Prostate gland (tissue), 2 donors: ENCODE measurements at regions of chr17 and their contacts with region 1.

Region 1: DNA sequence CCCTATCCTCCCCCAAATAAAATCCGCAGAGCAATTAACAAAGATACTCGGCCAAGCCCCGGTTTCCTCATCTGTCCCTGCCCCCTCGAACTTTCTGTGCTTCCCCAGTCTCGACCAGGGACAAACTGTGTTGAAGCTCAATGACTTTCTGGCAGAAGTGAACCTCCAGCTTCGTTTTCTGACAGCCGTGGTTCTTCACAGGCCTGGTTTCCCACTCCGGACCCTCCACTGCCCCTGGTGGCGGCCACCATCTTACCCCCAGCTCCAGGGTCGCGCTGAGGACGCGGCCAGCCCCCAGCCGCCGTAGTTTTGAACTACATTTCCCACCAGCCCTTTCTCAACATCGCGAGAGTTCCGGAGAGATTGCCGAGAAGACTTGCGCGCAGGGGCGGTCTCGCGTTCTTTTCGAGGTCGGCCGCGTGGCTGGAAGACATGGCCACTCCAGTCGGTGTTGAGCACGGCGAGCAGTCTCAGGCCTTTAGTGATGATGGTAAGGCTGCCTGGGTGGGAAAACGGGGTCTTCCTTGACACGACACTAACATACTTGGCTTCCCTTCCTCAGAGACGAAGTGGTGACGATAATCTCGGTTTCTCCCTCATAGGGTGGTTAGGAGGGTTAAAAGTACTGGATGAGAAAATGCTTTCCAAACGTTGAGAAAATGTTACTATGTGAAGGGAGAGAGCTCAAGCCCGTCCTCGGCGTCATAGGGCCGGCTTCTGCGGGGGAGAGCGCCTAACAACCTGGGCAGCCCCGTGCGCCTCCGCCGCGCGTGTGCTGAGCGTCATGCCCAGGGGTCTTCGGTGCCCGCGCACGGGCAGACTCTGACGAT is 17.7 kb downstream of the PRCD start:
- DNase-seq: peak; percentile 95
- H3K4me3 ChIP-seq: peak overlapping the region; percentile 48 to 61
- H3K27ac ChIP-seq: peak overlapping the region; percentile 84
- H3K4me1 ChIP-seq: no peaks in the 10 kb centered on the region
- H3K27me3 ChIP-seq: no peaks in the 10 kb centered on the region
- CTCF ChIP-seq: peak in 2 of 4 experiments; percentile 67 to 71
- POLR2A ChIP-seq: peak; percentile 77

Region 2: DNA sequence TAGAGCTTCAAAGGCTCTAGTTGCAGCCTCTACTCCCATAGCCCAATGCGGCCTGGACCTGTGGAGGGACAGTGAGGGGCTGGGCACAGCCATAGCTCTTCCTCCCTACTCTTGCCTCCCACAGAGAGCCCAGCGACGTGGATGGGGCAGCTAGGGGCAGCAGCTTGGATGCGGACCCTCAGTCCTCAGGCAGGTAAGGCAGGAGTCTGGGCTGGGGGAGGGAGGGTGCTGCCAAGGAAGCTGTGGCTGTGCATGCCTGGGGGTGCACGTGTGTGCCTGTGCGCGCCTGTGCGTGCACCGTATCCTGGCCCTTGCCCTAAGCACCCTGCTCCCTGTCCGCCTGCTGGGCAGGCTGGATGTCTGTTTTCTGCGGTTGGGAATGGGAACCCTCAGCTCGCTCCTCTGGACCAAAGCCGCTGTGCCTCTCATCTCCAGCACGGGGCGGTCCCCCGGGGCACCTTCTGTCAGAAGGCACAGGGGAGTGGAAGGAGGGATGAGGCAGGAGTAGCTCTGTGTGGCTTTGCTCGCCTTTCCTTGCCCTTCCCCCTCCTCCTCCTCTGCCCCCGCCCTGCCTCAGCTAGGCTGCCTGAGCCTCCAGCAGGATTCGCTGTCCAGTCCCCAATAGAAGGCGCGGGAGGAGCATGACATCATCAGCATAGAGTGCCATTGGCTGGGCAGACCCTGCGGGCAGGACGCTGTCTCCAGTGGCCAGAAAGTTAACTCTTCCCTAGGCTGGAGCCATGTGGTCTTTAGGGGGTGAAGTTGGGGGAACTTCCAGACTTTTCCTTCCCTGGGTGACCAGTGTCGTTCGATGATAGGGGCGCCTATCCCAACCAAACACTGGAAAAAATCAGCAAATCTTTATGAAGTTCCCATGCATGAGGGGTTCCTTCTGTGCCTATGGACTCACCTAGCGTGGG is 16.9 kb before region 1 on chr17:
- intact Hi-C with region 1: no loop called
- DNase-seq: peak; percentile 90
- H3K4me3 ChIP-seq: peak overlapping the region in 1 of 2 donors; percentile 22
- H3K27ac ChIP-seq: peak overlapping the region; percentile 47
- H3K4me1 ChIP-seq: peaks cover 4% of the 10 kb centered on the region
- H3K27me3 ChIP-seq: peaks cover 3% of the 10 kb centered on the region
- CTCF ChIP-seq: peak in 2 of 4 experiments; percentile 46
- POLR2A ChIP-seq: peak; percentile 52

Region 3: DNA sequence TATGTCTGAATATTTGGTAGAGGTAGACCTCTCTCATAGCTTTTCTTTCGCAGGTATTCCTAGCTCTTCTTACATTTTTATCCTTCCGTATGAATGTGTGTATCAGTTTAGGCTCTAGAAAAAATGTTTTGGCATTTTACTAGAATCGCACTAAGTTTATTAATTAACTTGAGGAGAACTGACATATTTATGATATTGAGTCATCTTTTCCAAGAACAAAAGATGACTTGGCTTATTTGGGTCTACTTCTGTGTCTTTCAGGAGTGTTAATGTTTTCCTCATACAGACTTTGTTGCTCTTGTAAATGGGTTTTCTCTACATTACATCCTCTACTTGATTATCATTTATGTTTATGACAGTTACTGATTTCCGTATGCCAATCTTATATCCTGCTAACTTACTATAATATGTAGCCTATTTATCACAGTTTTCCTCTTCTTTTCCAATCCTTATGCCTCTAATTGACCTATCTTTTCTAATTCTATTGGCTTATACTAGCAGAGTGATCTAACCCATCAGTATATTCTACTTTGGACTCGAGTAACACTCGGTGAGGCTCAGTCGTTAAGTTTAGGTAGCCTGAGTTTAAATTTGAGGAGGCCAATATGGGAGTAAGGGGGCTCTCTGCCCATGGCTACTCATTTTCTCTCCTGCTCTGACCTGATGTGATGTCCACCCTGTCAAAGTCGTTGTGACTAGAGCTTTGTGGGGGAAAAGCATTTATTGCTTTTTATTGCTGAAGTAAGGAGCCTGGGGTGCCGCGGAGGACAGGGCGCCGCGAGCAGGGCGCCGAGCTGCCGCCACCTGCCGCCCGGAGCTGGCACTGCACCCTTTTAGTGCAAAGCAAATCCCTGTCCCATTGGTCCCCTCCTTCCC is 65.9 kb after region 1 on chr17:
- intact Hi-C with region 1: loop called (anchors 5 kb)
- DNase-seq: peak; percentile 62
- H3K4me3 ChIP-seq: no peak overlapping the region
- H3K27ac ChIP-seq: no peak overlapping the region
- H3K4me1 ChIP-seq: no peaks in the 10 kb centered on the region
- H3K27me3 ChIP-seq: no peaks in the 10 kb centered on the region
- CTCF ChIP-seq: peak; percentile 84 to 95 (median 91)
- POLR2A ChIP-seq: no peak

Region 4: GRCh38 chr17:76671123-76671911 is 113.7 kb after region 1 on chr17:
- intact Hi-C with region 1: loop called (anchors 5 kb)
- DNase-seq: peak; percentile 100
- H3K4me3 ChIP-seq: peak overlapping the region; percentile 40 to 41
- H3K27ac ChIP-seq: peak overlapping the region; percentile 76 to 77
- H3K4me1 ChIP-seq: no peaks in the 10 kb centered on the region
- H3K27me3 ChIP-seq: no peaks in the 10 kb centered on the region
- CTCF ChIP-seq: no peak
- POLR2A ChIP-seq: no peak